Tibial artery (tissue), 4 donors: ENCODE measurements at regions of chr20 and their contacts with region 1.

Region 1: GRCh38 chr20:41408156-41408794 is 41.7 kb upstream of the EMILIN3 start:
- DNase-seq: no peak
- H3K4me3 ChIP-seq: no peak overlapping the region
- H3K27ac ChIP-seq: no peak overlapping the region
- H3K4me1 ChIP-seq: peaks cover 0 to 10% (median 4%) of the 10 kb centered on the region in 4 donors
- H3K27me3 ChIP-seq: no peaks in the 10 kb centered on the region
- CTCF ChIP-seq: no peak

Region 2: GRCh38 chr20:40606660-40607059 is 801.6 kb before region 1 on chr20:
- intact Hi-C with region 1: no loop called
- DNase-seq: no peak
- H3K4me3 ChIP-seq: no peak overlapping the region
- H3K27ac ChIP-seq: no peak overlapping the region
- H3K4me1 ChIP-seq: no peaks in the 10 kb centered on the region
- H3K27me3 ChIP-seq: peaks cover 0 to 12% of the 10 kb centered on the region in 2 donors
- CTCF ChIP-seq: no peak

Region 3: DNA sequence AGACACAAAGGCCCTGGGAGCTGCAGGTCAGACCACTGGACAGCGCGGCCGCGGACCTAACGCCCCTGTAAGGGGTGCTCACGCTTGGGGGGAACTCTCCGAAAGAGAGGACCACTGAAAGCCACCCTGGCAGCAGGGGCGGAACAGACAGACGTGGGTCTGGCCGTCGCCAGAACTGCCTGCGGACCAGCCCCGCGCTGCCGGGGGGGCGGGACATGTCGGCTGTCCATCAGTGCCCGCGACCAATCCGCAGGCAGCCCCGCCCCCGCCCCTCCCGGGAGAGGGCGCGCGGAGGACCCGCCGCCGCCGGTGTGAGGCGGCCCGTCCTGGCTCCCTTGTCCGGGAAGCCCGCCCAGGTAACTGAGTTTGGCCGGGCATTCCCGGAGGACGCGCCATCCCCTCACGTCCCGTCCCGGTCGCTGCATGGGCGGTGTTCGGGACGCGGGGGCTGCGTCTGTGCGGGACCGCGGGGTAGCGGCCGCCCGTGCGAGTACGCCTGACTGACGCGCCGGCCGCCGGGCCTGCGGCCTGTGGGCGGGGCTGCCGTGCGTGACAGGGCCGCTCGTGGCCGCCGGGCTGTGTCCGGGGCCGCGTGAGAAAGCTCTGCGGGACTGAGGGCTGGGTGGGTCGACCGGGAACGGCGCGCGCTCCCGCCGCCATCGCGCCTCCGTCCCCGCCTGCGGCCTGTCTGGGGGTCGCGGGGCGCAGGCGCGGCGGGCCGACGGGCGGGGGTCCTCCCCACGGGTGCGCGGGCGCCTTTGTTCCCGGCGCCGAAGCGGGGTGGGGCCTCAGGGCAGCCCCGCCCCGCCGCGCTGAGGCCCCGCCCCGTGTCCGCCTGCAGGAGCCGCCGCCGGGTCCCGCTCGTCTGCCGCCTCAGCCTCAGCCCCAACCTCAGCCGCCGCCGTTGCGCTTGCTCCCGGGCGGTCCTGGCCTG is 271.3 kb before region 1 on chr20 and contains the start of gene PLCG1:
- intact Hi-C with region 1: loop called (anchors 10 kb)
- DNase-seq: peak; percentile 89 to 95
- H3K4me3 ChIP-seq: peak within 1 kb of the TSS; percentile 73 to 85
- H3K27ac ChIP-seq: peak within 1 kb of the TSS; percentile 82 to 97
- H3K4me1 ChIP-seq: peaks cover 7 to 49% (median 36%) of the 10 kb centered on the region in 4 donors
- H3K27me3 ChIP-seq: no peaks in the 10 kb centered on the region
- CTCF ChIP-seq: peak in 1 of 2 experiments; percentile 18